Endothelial cell of umbilical vein (primary cell): ENCODE measurements at regions of chr4 and their contacts with region 1.

Region 1: DNA sequence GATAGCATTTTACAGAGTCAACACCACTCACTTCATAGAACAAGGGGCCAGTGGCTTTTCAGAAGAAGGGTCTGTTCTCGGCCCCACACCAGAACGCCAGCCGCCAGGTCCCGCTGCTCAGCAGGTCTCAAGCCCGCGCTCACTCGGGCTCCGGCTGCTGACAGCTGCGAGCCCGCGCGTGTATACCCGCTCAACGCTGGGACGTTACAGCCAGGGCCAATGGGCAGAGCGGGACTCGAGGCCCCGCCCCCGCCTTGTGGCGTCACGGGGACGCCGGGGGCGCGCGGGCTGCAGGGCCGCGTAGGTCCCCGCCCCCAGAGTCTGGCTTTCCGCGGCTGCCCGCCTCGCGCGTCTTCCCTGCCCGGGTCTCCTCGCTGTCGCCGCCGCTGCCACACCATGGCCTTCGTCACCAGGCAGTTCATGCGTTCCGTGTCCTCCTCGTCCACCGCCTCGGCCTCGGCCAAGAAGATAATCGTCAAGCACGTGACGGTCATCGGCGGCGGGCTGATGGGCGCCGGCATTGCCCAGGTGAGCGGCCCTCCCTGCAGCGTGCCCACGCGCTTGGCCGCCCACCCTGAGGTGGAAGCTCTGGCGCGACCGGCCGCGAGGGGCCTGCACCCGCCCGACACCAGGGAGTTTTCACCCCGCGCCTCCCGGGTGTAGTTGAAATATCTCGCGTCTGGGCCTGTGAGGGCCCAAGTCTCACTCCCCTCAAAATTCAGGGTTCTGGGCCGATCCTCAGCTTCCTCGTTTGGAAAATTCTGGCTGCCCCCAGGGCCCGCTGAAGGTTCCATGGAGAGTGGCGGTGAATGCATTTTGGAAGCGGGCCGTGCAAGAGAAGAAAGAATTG is at the start of gene HADH:
- DNase-seq: peak; percentile 93
- H3K4me3 ChIP-seq: peak within 1 kb of the TSS; percentile 52 to 66 (median 64)
- H3K27ac ChIP-seq: peak within 1 kb of the TSS; percentile 26
- H3K4me1 ChIP-seq: peaks cover 6% of the 10 kb centered on the region
- H3K27me3 ChIP-seq: no peaks in the 10 kb centered on the region
- CTCF ChIP-seq: no peak
- POLR2A ChIP-seq: peak; percentile 45
- total RNA-seq, gene HADH: 20.3 and 22.1 TPM in 2 replicates

Region 2: GRCh38 chr4:107930821-107931774 is 58.7 kb before region 1 on chr4 and contains the start of gene CYP2U1:
- CTCF ChIA-PET with region 1: interaction called, 3 read pairs
- POLR2A ChIA-PET with region 1: no interaction called
- dilution Hi-C with region 1: no loop called
- intact Hi-C with region 1: loop called (anchors 1 kb)
- DNase-seq: peak; percentile 87
- H3K4me3 ChIP-seq: peak within 1 kb of the TSS; percentile 22 to 76 (median 73)
- H3K27ac ChIP-seq: peak within 1 kb of the TSS; percentile 12
- H3K4me1 ChIP-seq: peaks cover 16% of the 10 kb centered on the region
- H3K27me3 ChIP-seq: no peaks in the 10 kb centered on the region
- CTCF ChIP-seq: no peak
- POLR2A ChIP-seq: no peak
- total RNA-seq, gene CYP2U1: 5.4 and 5.8 TPM in 2 replicates